CD14-positive monocyte (primary cell): ENCODE measurements at regions of chr2 and their contacts with region 1.

Region 1: DNA sequence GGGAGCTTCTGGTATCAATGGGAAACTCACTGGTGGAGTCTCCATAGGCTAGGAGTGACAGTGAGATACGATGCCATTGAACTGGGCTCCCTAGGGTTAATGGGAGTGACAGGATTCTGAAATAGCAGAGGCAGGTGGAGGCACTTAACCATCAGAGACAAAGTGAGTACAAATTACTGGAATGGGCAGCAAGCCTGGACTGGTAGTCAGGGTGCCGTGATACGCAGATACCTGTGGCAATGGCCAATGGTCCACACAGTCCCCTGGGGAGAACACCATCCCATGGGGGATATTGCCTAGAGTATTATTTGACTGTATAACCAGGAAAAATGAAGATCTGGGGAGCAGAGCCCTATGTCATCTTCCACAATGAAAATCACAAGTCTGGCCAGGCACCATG is 17.3 kb downstream of the CHCHD5 start:
- DNase-seq: no peak
- H3K4me3 ChIP-seq: no peak overlapping the region
- H3K4me3 Mint-ChIP-seq: no peak overlapping the region
- H3K27ac ChIP-seq: no peak overlapping the region
- H3K27ac Mint-ChIP-seq: no peak overlapping the region
- H3K4me1 ChIP-seq: peaks cover 6 to 8% of the 10 kb centered on the region in 2 donors
- H3K4me1 Mint-ChIP-seq: peaks cover 6% of the 10 kb centered on the region
- H3K27me3 ChIP-seq: no peaks in the 10 kb centered on the region
- H3K27me3 Mint-ChIP-seq: peaks cover 0 to 2% (median 1%) of the 10 kb centered on the region in 3 donors
- CTCF ChIP-seq: no peak

Region 2: GRCh38 chr2:112645310-112646101 is 43.8 kb after region 1 on chr2 and contains the start of gene SLC20A1:
- intact Hi-C with region 1: loop called (anchors 5 kb)
- DNase-seq: peak; percentile 92 to 97 (median 95)
- H3K4me3 ChIP-seq: peak within 1 kb of the TSS; percentile 76 to 99 (median 88)
- H3K4me3 Mint-ChIP-seq: peak within 1 kb of the TSS; percentile 89 to 95
- H3K27ac ChIP-seq: peak within 1 kb of the TSS; percentile 90 to 92
- H3K27ac Mint-ChIP-seq: peak within 1 kb of the TSS; percentile 87 to 95 (median 92)
- H3K4me1 ChIP-seq: peaks cover 41 to 55% of the 10 kb centered on the region in 2 donors
- H3K4me1 Mint-ChIP-seq: peaks cover 73% of the 10 kb centered on the region
- H3K27me3 ChIP-seq: no peaks in the 10 kb centered on the region
- H3K27me3 Mint-ChIP-seq: peaks cover 0 to 2% (median 0%) of the 10 kb centered on the region in 3 donors
- CTCF ChIP-seq: peak; percentile 26
- polyA plus RNA-seq, gene SLC20A1: 16.1 to 112 (median 36.3) TPM

Region 3: GRCh38 chr2:112726497-112727190 is 124.9 kb after region 1 on chr2:
- intact Hi-C with region 1: loop called (anchors 1 to 2 kb)
- DNase-seq: peak; percentile 94 to 96 (median 95)
- H3K4me3 ChIP-seq: no peak overlapping the region
- H3K4me3 Mint-ChIP-seq: no peak overlapping the region
- H3K27ac ChIP-seq: peak overlapping the region in 1 of 2 donors; percentile 54
- H3K27ac Mint-ChIP-seq: peak overlapping the region in 4 of 7 donors; percentile 78 to 85 (median 80)
- H3K4me1 ChIP-seq: peaks cover 63 to 69% of the 10 kb centered on the region in 2 donors
- H3K4me1 Mint-ChIP-seq: peaks cover 58% of the 10 kb centered on the region
- H3K27me3 ChIP-seq: no peaks in the 10 kb centered on the region
- H3K27me3 Mint-ChIP-seq: peaks cover 0 to 2% (median 0%) of the 10 kb centered on the region in 3 donors
- CTCF ChIP-seq: peak; percentile 97

Region 4: DNA sequence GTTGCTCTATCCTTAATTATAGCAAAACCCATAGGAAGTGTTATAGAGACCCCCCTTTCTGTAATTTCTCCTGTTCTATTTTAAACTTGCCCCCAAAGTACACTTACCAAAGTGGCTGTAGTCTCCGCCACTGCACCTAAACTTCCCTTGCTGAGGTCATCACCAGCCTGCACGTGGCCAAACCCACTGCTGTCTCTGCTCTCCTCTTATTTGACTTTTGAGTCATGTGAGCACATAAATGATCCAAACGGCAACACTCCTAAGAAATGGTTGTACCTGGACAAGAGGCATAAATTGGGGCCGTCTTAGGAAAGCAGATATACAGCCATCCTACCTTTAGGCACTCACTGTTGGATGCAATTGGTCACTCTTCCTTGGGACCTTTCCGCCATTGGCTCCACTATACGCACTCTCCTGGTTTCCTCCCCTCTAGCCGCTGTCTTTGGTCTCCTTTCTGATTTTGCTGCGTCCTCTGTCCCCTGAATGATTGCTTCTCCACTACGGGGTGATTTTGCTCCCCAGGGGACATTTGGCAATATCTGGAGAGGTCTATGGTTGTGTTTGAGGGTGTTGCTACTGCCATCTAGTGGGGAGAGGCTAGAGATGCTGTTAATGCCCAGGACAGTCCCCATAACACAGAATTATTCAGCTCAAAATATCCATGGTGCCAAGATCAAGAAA is 356.8 kb after region 1 on chr2:
- intact Hi-C with region 1: loop called in 1 of 2 experiments (anchors 10 kb)
- DNase-seq: peak; percentile 45 to 74 (median 47)
- H3K4me3 ChIP-seq: no peak overlapping the region
- H3K4me3 Mint-ChIP-seq: no peak overlapping the region
- H3K27ac ChIP-seq: no peak overlapping the region
- H3K27ac Mint-ChIP-seq: no peak overlapping the region
- H3K4me1 ChIP-seq: no peaks in the 10 kb centered on the region
- H3K4me1 Mint-ChIP-seq: no peaks in the 10 kb centered on the region
- H3K27me3 ChIP-seq: no peaks in the 10 kb centered on the region
- H3K27me3 Mint-ChIP-seq: peaks cover 0 to 2% (median 0%) of the 10 kb centered on the region in 3 donors
- CTCF ChIP-seq: peak; percentile 82